K562 (cell line): ENCODE measurements at regions of chr1 and their contacts with region 1.

Region 1: DNA sequence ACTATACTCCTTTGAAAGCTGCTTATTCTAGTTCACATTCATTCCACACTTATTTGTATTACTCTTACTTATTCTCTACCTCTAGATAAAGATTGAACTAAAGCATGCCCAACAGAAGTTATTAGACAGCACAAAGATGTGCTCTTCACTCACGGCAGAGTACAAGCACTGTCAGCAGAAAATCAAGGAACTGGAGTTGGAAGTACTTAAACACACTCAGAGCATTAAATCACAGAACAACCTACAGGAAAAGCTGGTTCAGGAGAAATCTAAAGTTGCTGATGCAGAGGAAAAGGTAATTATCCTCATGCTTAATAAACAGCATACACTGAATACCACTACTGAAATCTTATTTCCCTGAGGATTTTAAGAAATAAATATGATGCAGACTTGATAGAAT is 81.3 kb upstream of the PPIH start:
- DNase-seq: no peak
- ATAC-seq: no peak
- H3K4me3 ChIP-seq: no peak overlapping the region
- H3K27ac ChIP-seq: no peak overlapping the region
- H3K4me1 ChIP-seq: no peaks in the 10 kb centered on the region
- H3K27me3 ChIP-seq: peaks cover 2 to 4% of the 10 kb centered on the region in 2 experiments; a peak in 1 of 5 replicates
- CTCF ChIP-seq: no peak
- EP300 ChIP-seq: no peak
- POLR2A ChIP-seq: no peak
- RAD21 ChIP-seq: no peak

Region 2: GRCh38 chr1:41545986-41546832 is 1030.7 kb before region 1 on chr1:
- CTCF ChIA-PET with region 1: no interaction called
- POLR2A ChIA-PET with region 1: no interaction called
- in situ Hi-C with region 1: no loop called
- intact Hi-C with region 1: no loop called
- DNase-seq: no peak
- ATAC-seq: no peak; the same call in 2 of the 3 replicates
- H3K4me3 ChIP-seq: no peak overlapping the region
- H3K27ac ChIP-seq: no peak overlapping the region
- H3K4me1 ChIP-seq: no peaks in the 10 kb centered on the region; a peak in 1 of 5 replicates
- H3K27me3 ChIP-seq: peaks cover 2 to 9% of the 10 kb centered on the region in 2 experiments; a peak in 1 of 5 replicates
- CTCF ChIP-seq: no peak
- EP300 ChIP-seq: no peak
- POLR2A ChIP-seq: no peak
- RAD21 ChIP-seq: no peak

Region 3: DNA sequence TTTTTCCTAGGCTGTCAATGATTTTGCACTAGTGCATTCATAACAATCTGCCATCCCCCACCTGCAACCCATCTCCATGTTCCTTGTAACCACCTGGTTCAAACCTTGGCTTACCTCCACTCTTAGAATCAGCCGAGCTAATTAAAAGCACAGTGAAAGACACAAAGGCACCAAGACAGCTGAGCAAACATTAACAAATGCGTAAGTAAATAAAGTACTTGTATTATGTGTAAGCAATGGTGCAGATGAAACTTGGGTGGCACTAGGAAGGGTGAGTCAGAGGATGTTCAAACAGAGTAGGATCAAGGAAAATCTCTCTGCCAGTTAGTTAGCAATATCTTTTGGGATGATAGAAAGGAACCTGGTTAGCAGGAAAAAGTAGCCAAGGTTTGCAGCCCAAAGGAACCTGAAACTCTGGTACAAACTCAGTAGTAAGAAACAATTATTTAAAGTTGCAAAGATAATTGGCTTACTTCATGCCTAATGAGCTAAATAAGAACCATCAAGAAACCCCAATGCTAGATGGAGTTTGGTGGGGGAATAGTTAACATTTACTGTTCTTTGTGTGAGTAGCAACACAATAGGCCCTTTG is 236.7 kb before region 1 on chr1:
- CTCF ChIA-PET with region 1: no interaction called
- POLR2A ChIA-PET with region 1: no interaction called
- in situ Hi-C with region 1: no loop called
- intact Hi-C with region 1: loop called (anchors 10 kb)
- DNase-seq: no peak
- ATAC-seq: no peak
- H3K4me3 ChIP-seq: no peak overlapping the region
- H3K27ac ChIP-seq: no peak overlapping the region
- H3K4me1 ChIP-seq: peaks cover 9% of the 10 kb centered on the region in 2 experiments; a peak in 2 of 5 replicates
- H3K27me3 ChIP-seq: peaks cover under 1 to 7% of the 10 kb centered on the region in 2 experiments; a peak in 4 of 5 replicates
- CTCF ChIP-seq: no peak
- EP300 ChIP-seq: no peak
- POLR2A ChIP-seq: no peak
- RAD21 ChIP-seq: no peak

Region 4: DNA sequence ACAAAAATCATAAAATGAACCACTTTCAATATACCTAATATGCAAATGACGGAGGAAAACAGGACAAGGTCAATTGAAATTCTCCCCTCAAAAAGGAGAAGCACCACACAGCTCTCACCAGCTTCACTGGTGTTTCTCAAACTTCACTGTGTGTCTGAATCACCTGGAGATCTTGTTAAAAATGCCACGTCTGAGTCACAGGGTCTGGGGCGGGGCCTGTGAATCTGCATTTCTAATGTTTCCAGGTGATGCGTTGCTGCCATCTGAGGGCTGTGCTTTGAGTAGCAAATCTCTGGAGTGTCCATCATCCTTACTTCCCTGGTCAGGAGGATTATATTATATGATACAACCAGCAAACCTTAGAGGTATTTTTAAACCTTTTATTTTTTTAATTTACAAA is 154.1 kb after region 1 on chr1:
- CTCF ChIA-PET with region 1: interaction called, 6 read pairs
- POLR2A ChIA-PET with region 1: no interaction called
- in situ Hi-C with region 1: loop called (anchors 25 kb)
- intact Hi-C with region 1: loop called (anchors 1 kb)
- DNase-seq: peak; percentile 47 to 72 (median 52)
- ATAC-seq: peak; percentile 66
- H3K4me3 ChIP-seq: no peak overlapping the region
- H3K27ac ChIP-seq: no peak overlapping the region
- H3K4me1 ChIP-seq: peaks cover 0 to 11% of the 10 kb centered on the region in 2 experiments; a peak in 3 of 5 replicates
- H3K27me3 ChIP-seq: peaks cover 2 to 24% of the 10 kb centered on the region in 2 experiments; a peak in 3 of 5 replicates
- CTCF ChIP-seq: peak; percentile 59 to 69 (median 65); a peak in 5 of 6 replicates
- EP300 ChIP-seq: no peak
- POLR2A ChIP-seq: no peak
- RAD21 ChIP-seq: peak in 1 of 2 experiments; percentile 88; a peak in 2 of 4 replicates

Region 5: GRCh38 chr1:42756956-42757891 is 180.3 kb after region 1 on chr1:
- CTCF ChIA-PET with region 1: interaction called, 4 read pairs
- POLR2A ChIA-PET with region 1: no interaction called
- in situ Hi-C with region 1: no loop called
- intact Hi-C with region 1: loop called (anchors 2 kb)
- DNase-seq: peak; percentile 75 to 82 (median 78)
- ATAC-seq: peak; percentile 97
- H3K4me3 ChIP-seq: no peak overlapping the region
- H3K27ac ChIP-seq: peak overlapping the region; percentile 16; the same call in 2 of the 3 replicates
- H3K4me1 ChIP-seq: peaks cover 0 to 4% of the 10 kb centered on the region in 2 experiments; a peak in 3 of 5 replicates
- H3K27me3 ChIP-seq: no peaks in the 10 kb centered on the region
- CTCF ChIP-seq: peak; percentile 79 to 84 (median 83)
- EP300 ChIP-seq: no peak
- POLR2A ChIP-seq: no peak
- RAD21 ChIP-seq: peak; percentile 44 to 71

Region 6: GRCh38 chr1:42777852-42778251 is 200.9 kb after region 1 on chr1:
- CTCF ChIA-PET with region 1: no interaction called
- POLR2A ChIA-PET with region 1: no interaction called
- in situ Hi-C with region 1: no loop called
- intact Hi-C with region 1: no loop called
- DNase-seq: peak; percentile 75 to 80 (median 76)
- ATAC-seq: peak; percentile 94
- H3K4me3 ChIP-seq: no peak overlapping the region
- H3K27ac ChIP-seq: no peak overlapping the region
- H3K4me1 ChIP-seq: no peaks in the 10 kb centered on the region; a peak in 1 of 5 replicates
- H3K27me3 ChIP-seq: no peaks in the 10 kb centered on the region
- CTCF ChIP-seq: peak; percentile 84 to 94 (median 94)
- EP300 ChIP-seq: no peak
- POLR2A ChIP-seq: no peak
- RAD21 ChIP-seq: peak; percentile 92 to 97

Region 7: DNA sequence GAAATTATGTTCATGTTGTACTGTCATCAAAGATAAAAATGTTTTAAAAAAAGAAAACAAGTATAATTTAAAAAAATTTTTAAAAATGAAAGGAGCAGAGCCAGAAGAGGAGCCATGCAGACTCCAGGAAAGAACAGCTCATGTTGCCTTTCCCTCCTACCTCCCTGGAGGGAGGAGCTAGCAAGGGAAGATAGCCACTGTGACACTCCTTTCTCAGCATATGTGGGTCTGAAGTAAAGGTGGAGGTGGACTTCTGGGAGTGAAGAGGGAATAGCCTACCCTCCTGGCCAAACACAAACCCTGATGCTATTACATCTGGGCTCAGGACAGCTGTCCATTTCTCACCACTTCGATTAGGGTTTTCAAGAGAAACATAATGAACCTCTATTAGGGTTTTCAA is 327.5 kb after region 1 on chr1:
- CTCF ChIA-PET with region 1: no interaction called
- POLR2A ChIA-PET with region 1: no interaction called
- in situ Hi-C with region 1: no loop called
- intact Hi-C with region 1: loop called (anchors 10 kb)
- DNase-seq: peak in 2 of 4 experiments; percentile 25 to 44
- ATAC-seq: peak; percentile 88
- H3K4me3 ChIP-seq: no peak overlapping the region
- H3K27ac ChIP-seq: no peak overlapping the region
- H3K4me1 ChIP-seq: no peaks in the 10 kb centered on the region
- H3K27me3 ChIP-seq: peaks cover 0 to 9% of the 10 kb centered on the region in 2 experiments; a peak in 2 of 5 replicates
- CTCF ChIP-seq: no peak
- EP300 ChIP-seq: no peak
- POLR2A ChIP-seq: no peak
- RAD21 ChIP-seq: no peak